ENCODE measurements at regions of chr4 and their contacts with region 1.

Region 1: GRCh38 chr4:140213749-140214148 is 59.8 kb upstream of the MAML3 start:
- DNase-seq: no peak
- ATAC-seq: no peak
- H3K4me3 ChIP-seq: no peak overlapping the region
- H3K27ac ChIP-seq: no peak overlapping the region
- H3K4me1 ChIP-seq: no peaks in the 10 kb centered on the region
- H3K27me3 ChIP-seq: no peaks in the 10 kb centered on the region
- CTCF ChIP-seq: no peak
- POLR2A ChIP-seq: no peak

Region 2: GRCh38 chr4:139481465-139481864 is 732.3 kb before region 1 on chr4:
- intact Hi-C with region 1: no loop called
- DNase-seq: no peak
- ATAC-seq: no peak
- H3K4me3 ChIP-seq: no peak overlapping the region
- H3K27ac ChIP-seq: no peak overlapping the region
- H3K4me1 ChIP-seq: peaks cover 0 to 20% (median 0%) of the 10 kb centered on the region in 12 donors
- H3K27me3 ChIP-seq: no peaks in the 10 kb centered on the region
- CTCF ChIP-seq: no peak
- POLR2A ChIP-seq: no peak

Region 3: GRCh38 chr4:140174543-140174942 is 39.2 kb before region 1 on chr4:
- intact Hi-C with region 1: loop called in 1 of 10 experiments (anchors 5 kb)
- DNase-seq: no peak
- ATAC-seq: no peak
- H3K4me3 ChIP-seq: no peak overlapping the region
- H3K27ac ChIP-seq: no peak overlapping the region
- H3K4me1 ChIP-seq: no peaks in the 10 kb centered on the region
- H3K27me3 ChIP-seq: no peaks in the 10 kb centered on the region
- CTCF ChIP-seq: no peak
- POLR2A ChIP-seq: no peak

Measured in heart left ventricle (tissue), 16 donors.